Activated B cell treated with CpG ODN at 0.5 μM for 24 hours (primary cell): ENCODE measurements at regions of chr2 and their contacts with region 1.

Region 1: DNA sequence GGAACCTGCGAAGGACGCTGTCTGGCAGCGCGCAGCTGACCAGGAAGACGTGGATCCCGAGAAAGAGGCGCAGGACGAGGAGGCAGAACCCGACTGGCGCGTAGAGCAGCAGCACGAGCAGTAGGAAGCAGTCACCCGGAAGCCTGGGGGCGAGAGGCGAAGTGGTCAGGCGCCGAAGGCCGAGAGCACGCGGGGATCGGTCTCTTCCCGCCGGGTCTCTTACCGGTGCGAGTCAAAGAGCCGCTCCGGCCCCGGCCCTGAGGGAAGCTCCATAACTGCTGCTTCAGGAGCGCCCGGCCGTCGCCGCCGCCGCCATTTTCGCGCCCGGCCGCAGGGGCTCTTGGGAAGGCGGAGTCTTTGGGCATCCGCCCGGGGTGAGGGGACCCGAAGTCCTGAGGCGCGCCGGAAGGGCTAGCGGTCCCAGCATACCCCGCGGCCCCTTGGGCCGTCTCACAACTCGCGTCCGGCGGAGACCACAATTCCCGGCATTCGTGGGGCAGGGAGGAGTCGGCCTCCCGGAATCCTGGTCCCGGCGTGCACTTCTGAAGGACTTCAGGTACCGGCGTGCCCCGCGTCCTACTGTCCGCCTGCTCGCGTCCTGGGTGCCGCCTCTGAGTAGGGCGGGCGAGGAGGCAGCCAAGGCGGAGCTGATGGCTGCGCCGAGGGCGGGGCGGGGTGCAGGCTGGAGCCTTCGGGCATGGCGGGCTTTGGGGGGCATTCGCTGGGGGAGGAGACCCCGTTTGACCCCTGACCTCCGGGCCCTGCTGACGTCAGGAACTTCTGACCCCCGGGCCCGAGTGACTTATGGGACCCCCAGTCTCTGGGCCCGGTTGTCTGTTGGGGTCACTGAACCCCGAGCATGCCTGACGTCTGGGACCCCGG is at the starts of genes AUP1 and HTRA2:
- DNase-seq: peak; percentile 87
- ATAC-seq: peak; percentile 83
- H3K4me3 Mint-ChIP-seq: peak within 1 kb of the TSS; percentile 97
- H3K27ac Mint-ChIP-seq: peak within 1 kb of the TSS; percentile 96
- H3K4me1 Mint-ChIP-seq: peaks cover 55% of the 10 kb centered on the region
- H3K27me3 Mint-ChIP-seq: no peaks in the 10 kb centered on the region
- CTCF ChIP-seq: no peak
- total RNA-seq, gene AUP1: 167 and 177 TPM in 2 replicates
- total RNA-seq, gene HTRA2: 49.4 and 53.1 TPM in 2 replicates

Region 2: GRCh38 chr2:73926493-73927338 is 602.9 kb before region 1 on chr2 and contains the start of gene DGUOK:
- CTCF ChIA-PET with region 1: no interaction called
- POLR2A ChIA-PET with region 1: no interaction called
- intact Hi-C with region 1: loop called (anchors 1 kb)
- DNase-seq: peak; percentile 88
- ATAC-seq: peak; percentile 95
- H3K4me3 Mint-ChIP-seq: peak within 1 kb of the TSS; percentile 92
- H3K27ac Mint-ChIP-seq: peak within 1 kb of the TSS; percentile 93
- H3K4me1 Mint-ChIP-seq: peaks cover 60% of the 10 kb centered on the region
- H3K27me3 Mint-ChIP-seq: no peaks in the 10 kb centered on the region
- CTCF ChIP-seq: no peak
- total RNA-seq, gene DGUOK: 70.1 and 77.4 TPM in 2 replicates

Region 3: GRCh38 chr2:74250189-74250631 is 279.4 kb before region 1 on chr2:
- CTCF ChIA-PET with region 1: interaction called, 11 read pairs
- POLR2A ChIA-PET with region 1: interaction called, 3 read pairs
- intact Hi-C with region 1: no loop called
- DNase-seq: peak; percentile 43
- ATAC-seq: peak; percentile 64
- H3K4me3 Mint-ChIP-seq: no peak overlapping the region
- H3K27ac Mint-ChIP-seq: no peak overlapping the region
- H3K4me1 Mint-ChIP-seq: peaks cover 2% of the 10 kb centered on the region
- H3K27me3 Mint-ChIP-seq: no peaks in the 10 kb centered on the region
- CTCF ChIP-seq: no peak

Region 4: DNA sequence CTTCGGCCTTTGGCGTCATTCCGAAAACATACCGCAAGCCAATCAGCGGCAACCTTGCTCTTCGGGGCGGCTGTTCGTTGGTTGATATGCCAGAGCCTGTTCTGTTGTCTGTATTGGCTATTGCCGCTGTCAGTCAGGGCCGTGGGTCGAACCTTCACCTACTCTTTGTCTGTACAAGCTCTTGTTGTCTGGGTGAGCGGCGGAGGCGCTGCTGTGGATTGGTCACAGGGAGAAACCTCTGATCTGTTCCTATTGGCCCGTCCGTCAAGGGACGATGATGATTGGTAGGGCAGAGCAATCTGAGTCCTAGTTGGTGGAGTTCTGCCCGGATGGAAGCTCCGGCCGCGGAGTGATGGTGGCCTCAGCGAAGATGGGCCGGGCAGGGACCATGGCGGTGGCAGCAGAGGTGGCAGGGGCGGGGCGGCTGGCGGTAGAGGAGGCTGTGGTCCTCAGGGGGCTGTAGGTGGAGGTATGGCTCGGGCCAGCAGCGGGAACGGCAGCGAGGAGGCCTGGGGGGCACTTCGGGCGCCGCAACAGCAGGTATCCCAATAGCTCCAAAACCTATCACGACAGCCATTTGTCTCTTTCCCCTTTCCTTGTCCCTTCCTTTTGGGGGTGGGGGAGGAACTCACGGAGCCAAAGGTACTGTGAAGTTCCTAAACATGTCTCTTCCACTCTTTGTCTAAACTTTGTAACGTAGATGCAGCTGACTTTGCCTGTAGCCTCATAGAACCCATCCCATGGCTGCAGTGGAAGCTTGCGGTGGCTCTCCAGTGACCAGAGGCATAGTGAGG is 71.3 kb before region 1 on chr2 and contains the start of gene WBP1:
- CTCF ChIA-PET with region 1: interaction called, 3 read pairs
- POLR2A ChIA-PET with region 1: interaction called, 46 read pairs
- intact Hi-C with region 1: loop called (anchors 1 kb)
- DNase-seq: peak; percentile 87
- ATAC-seq: peak; percentile 81
- H3K4me3 Mint-ChIP-seq: peak within 1 kb of the TSS; percentile 99
- H3K27ac Mint-ChIP-seq: peak within 1 kb of the TSS; percentile 100
- H3K4me1 Mint-ChIP-seq: peaks cover 62% of the 10 kb centered on the region
- H3K27me3 Mint-ChIP-seq: no peaks in the 10 kb centered on the region
- CTCF ChIP-seq: no peak
- total RNA-seq, gene WBP1: 61.4 and 65.3 TPM in 2 replicates

Region 5: GRCh38 chr2:74507145-74507925 is 22.3 kb before region 1 on chr2 and contains the start of gene PCGF1:
- CTCF ChIA-PET with region 1: interaction called, 11 read pairs
- POLR2A ChIA-PET with region 1: interaction called, 63 read pairs
- intact Hi-C with region 1: loop called (anchors 1 kb)
- DNase-seq: peak; percentile 99
- ATAC-seq: peak; percentile 85
- H3K4me3 Mint-ChIP-seq: peak within 1 kb of the TSS; percentile 96
- H3K27ac Mint-ChIP-seq: peak within 1 kb of the TSS; percentile 100
- H3K4me1 Mint-ChIP-seq: peaks cover 52% of the 10 kb centered on the region
- H3K27me3 Mint-ChIP-seq: peaks cover 24% of the 10 kb centered on the region
- CTCF ChIP-seq: no peak
- total RNA-seq, gene PCGF1: 29.3 and 34.7 TPM in 2 replicates

Region 6: DNA sequence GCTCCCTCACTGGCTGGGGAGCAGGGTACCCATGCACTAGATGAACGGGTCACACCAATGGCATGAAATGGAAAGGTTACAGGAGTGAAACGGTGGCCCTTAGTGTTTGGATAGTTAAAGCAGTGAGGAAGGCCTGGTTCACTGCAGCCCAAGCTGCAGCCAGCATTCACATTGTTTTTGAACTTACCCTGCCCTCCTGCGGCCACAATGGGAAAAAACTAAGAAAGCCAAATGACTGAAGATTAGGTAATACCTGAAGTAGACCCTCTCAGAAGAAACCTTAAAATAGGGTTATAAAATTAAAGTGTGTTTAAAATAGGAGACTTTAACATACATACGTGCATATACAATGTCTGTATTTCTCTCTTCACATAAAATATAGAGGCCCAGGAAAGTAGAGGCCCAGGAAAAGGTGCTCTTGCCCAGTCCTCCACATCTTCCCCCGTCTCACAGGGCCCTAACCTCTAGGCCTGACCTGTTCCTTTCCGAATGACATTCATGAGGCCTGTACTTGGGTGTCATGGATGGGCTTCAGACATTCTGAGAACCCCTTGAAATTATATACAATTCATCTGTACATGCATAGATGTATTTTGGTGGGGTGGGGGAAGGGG is 58.2 kb after region 1 on chr2:
- CTCF ChIA-PET with region 1: interaction called, 34 read pairs
- POLR2A ChIA-PET with region 1: interaction called, 8 read pairs
- intact Hi-C with region 1: loop called (anchors 1 kb)
- DNase-seq: peak; percentile 43
- ATAC-seq: peak; percentile 96
- H3K4me3 Mint-ChIP-seq: no peak overlapping the region
- H3K27ac Mint-ChIP-seq: no peak overlapping the region
- H3K4me1 Mint-ChIP-seq: peaks cover 8% of the 10 kb centered on the region
- H3K27me3 Mint-ChIP-seq: peaks cover 4% of the 10 kb centered on the region
- CTCF ChIP-seq: no peak